ENCODE measurements at regions of chr19 and their contacts with region 1.

Region 1: GRCh38 chr19:24086974-24087595 is at the start of gene ZNF254:
- DNase-seq: peak; percentile 95
- ATAC-seq: peak; percentile 99
- H3K4me3 ChIP-seq: peak within 1 kb of the TSS; percentile 89
- H3K27ac ChIP-seq: peak within 1 kb of the TSS; percentile 97
- H3K4me1 ChIP-seq: no peaks in the 10 kb centered on the region
- H3K27me3 ChIP-seq: no peaks in the 10 kb centered on the region
- CTCF ChIP-seq: no peak
- POLR2A ChIP-seq: peak; percentile 93
- RAD21 ChIP-seq: no peak
- total RNA-seq, gene ZNF254: 8.8 and 15.0 TPM in 2 replicates

Region 2: DNA sequence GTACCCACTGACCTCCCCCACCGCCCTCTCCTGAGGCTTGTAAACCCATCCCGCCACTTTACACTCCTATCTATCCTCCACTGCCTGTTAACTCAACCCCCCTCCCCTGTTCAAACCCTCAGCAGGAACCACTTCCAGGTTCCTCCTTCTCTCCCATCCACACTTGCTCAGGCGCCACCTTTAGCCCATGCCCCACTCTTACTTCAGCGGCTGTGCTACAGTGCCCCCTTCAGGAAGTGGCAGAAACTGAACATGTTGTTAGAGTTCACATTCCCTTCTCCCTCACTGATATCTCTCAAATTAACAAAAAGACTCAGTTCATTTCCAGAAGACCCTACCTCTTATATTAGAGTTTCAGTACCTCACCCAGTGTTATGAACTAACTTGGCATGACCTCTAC is 741.2 kb before region 1 on chr19:
- CTCF ChIA-PET with region 1: no interaction called
- POLR2A ChIA-PET with region 1: interaction called, 10 read pairs
- dilution Hi-C with region 1: no loop called
- in situ Hi-C with region 1: no loop called
- intact Hi-C with region 1: no loop called
- DNase-seq: no peak
- ATAC-seq: no peak
- H3K4me3 ChIP-seq: no peak overlapping the region
- H3K27ac ChIP-seq: no peak overlapping the region
- H3K4me1 ChIP-seq: no peaks in the 10 kb centered on the region
- H3K27me3 ChIP-seq: no peaks in the 10 kb centered on the region
- CTCF ChIP-seq: no peak
- POLR2A ChIP-seq: no peak
- RAD21 ChIP-seq: no peak

Region 3: GRCh38 chr19:24033301-24033962 is 53.7 kb before region 1 on chr19:
- CTCF ChIA-PET with region 1: no interaction called
- POLR2A ChIA-PET with region 1: no interaction called
- dilution Hi-C with region 1: no loop called
- in situ Hi-C with region 1: no loop called
- intact Hi-C with region 1: no loop called
- DNase-seq: peak; percentile 91
- ATAC-seq: peak; percentile 96
- H3K4me3 ChIP-seq: peak overlapping the region; percentile 97
- H3K27ac ChIP-seq: peak overlapping the region; percentile 96
- H3K4me1 ChIP-seq: no peaks in the 10 kb centered on the region
- H3K27me3 ChIP-seq: no peaks in the 10 kb centered on the region
- CTCF ChIP-seq: 0 out of 2 replicates have a peak, but pooled peaks have one; percentile 18
- POLR2A ChIP-seq: peak; percentile 86
- RAD21 ChIP-seq: peak; percentile 10; the same call in 1 of the 2 replicates

Region 4: DNA sequence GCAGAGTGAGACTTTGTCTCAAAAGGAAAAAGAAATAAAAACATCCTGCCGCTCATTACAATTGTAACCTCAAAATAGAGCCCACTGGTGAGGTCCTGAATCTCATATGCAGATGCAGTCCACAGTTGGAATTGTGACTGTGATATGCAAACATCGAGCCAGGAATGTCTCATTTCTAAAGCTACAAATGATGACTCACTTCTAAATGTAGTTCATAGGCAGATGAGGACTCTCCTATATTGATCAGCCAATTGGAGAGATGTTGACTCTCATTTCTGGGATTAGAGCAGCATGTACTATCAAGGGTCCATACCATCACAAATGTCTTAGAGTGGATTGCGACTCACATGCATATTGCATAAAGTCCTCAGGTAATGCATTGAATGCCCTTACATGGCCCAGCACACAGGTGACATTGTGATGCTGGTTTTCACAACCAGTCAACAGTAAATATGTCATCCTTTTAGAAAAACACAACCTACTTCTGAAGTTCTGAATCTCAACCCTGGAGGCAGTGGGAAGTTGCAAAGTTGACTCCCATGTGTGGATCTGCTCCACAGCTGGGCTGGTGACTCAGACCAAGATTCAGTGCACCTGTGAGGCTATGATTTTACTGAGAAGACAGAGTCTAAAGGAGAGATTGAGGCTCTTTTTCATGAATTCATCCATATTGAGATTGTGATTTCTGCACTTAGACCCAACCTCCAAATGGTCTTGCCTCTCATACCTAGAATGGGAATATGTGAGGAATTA is 17.0 kb before region 1 on chr19:
- CTCF ChIA-PET with region 1: no interaction called
- POLR2A ChIA-PET with region 1: interaction called, 23 read pairs
- dilution Hi-C with region 1: no loop called
- in situ Hi-C with region 1: no loop called
- intact Hi-C with region 1: no loop called
- DNase-seq: peak; percentile 47
- ATAC-seq: peak; percentile 68
- H3K4me3 ChIP-seq: no peak overlapping the region
- H3K27ac ChIP-seq: no peak overlapping the region
- H3K4me1 ChIP-seq: no peaks in the 10 kb centered on the region
- H3K27me3 ChIP-seq: no peaks in the 10 kb centered on the region
- CTCF ChIP-seq: no peak
- POLR2A ChIP-seq: no peak
- RAD21 ChIP-seq: no peak

Region 5: DNA sequence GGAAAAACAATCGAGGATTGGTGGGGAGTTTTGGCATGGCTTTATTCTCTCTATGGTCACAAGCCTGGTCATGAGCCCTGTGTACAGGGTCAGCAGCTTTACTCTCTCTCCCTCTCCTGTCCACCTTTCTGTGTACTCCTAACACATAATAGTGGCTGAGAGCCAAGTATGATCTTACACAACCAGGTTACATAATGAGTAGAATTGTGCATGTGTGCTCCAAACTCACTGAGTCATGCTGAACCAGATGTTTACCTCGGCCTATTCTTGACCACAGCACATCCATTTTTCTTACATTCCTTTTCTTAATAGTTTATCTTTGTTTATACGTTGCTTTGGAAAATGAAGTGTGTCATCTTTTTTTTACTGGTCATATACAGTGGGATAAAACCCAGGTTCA is 53.0 kb after region 1 on chr19:
- CTCF ChIA-PET with region 1: no interaction called
- POLR2A ChIA-PET with region 1: no interaction called
- dilution Hi-C with region 1: no loop called
- in situ Hi-C with region 1: no loop called
- intact Hi-C with region 1: loop called (anchors 1 kb)
- DNase-seq: peak; percentile 96
- ATAC-seq: peak; percentile 83
- H3K4me3 ChIP-seq: no peak overlapping the region
- H3K27ac ChIP-seq: peak overlapping the region; percentile 34; the same call in 1 of the 2 replicates
- H3K4me1 ChIP-seq: peaks cover 2% of the 10 kb centered on the region; the same call in 1 of the 2 replicates
- H3K27me3 ChIP-seq: no peaks in the 10 kb centered on the region
- CTCF ChIP-seq: no peak
- POLR2A ChIP-seq: no peak
- RAD21 ChIP-seq: no peak